Common myeloid progenitor, CD34-positive (primary cell): ENCODE measurements at regions of chr16 and their contacts with region 1.

Region 1: DNA sequence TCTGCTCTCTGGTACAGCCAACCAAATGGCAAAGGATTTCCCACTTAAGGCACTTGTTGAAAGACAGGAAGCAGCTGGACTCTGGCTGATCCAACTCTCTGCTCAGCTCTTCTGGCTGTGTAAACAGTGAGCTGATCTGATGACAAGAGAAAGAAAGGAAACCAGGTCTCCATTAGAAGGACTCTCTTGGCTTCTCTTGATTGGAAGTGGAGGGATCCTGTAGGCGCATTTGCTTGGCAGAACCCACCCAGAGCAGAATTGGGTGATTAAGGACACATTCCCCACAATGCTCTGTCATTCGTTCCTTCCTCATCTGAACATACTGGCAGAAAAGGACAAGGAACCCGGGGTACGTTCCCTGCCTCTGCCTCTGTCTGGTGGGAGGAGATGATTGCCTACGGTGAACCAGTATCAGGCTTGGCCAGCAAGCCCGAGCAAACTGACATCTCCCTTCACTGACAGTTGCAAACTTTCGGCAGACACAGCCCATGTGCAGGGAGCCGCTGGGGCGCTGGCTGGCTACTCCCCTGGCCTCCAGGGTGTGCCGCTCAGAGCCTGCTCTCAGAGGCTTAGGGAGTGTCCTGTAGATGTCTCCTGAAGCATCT is 29.1 kb downstream of the LDHD start:
- DNase-seq: peak in 2 of 3 donors; percentile 79 to 87
- H3K4me3 ChIP-seq: peak overlapping the region in 4 of 7 experiments; percentile 17 to 58 (median 34)
- H3K27ac ChIP-seq: peak overlapping the region; percentile 11 to 73
- H3K4me1 ChIP-seq: peaks cover 16 to 91% (median 66%) of the 10 kb centered on the region in 4 experiments
- H3K27me3 ChIP-seq: no peaks in the 10 kb centered on the region

Region 2: GRCh38 chr16:75099756-75100602 is 12.5 kb after region 1 on chr16:
- CTCF ChIA-PET with region 1: interaction called, 88 read pairs
- POLR2A ChIA-PET with region 1: interaction called, 4 read pairs
- DNase-seq: peak in 2 of 3 donors; percentile 60 to 62
- H3K4me3 ChIP-seq: peak overlapping the region in 4 of 7 experiments; percentile 8 to 30 (median 22)
- H3K27ac ChIP-seq: peak overlapping the region in 1 of 2 experiments; percentile 15
- H3K4me1 ChIP-seq: peaks cover 5 to 90% (median 79%) of the 10 kb centered on the region in 4 experiments
- H3K27me3 ChIP-seq: no peaks in the 10 kb centered on the region

Region 3: DNA sequence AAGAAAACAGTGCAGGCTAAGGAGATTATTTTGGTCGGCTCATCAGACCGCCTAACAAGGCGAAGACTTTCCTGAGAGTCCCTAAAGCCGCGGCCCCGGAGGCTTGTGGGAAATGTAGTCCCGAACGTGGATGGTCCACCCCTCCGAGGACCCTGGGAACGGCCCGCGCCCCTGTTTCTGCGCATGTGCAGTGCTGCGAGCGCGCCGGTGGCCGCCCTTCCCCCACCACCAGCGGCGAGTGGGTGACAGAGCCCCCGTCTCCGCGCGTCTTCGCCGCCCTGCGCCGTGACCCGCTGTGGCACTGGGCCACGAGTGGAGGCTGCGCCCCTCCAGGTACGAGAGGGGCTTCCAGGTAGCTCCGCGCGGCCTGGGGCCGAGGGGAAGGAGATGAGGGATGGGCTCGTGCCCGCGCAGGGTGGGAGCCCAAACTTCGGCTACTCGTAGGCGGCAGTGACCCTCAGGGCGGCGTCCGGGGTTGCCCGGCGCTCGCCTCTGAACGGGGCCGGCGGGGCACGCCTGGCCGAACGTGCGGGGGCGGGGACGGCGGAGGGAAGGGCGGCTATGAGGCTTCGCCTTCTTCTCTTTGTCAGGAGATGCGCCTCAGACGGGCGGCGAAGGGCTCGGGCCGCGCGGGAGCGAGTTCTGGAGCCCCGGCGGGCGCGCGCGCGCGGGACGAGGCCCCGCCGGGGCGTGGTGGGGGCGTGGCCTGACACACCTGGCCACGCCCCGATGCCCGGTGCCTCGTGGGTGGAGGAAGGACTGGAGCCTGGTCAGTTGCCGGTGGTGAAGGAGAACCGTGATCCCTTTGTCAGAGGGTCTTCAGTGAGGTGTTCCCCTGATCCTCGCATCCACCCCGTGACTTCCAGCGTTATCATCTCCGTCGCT is 61.1 kb after region 1 on chr16 and contains the start of gene ZFP1:
- CTCF ChIA-PET with region 1: no interaction called
- POLR2A ChIA-PET with region 1: no interaction called
- DNase-seq: peak; percentile 92 to 95 (median 94)
- H3K4me3 ChIP-seq: peak within 1 kb of the TSS; percentile 94 to 97 (median 97)
- H3K27ac ChIP-seq: peak within 1 kb of the TSS in 1 of 2 experiments; percentile 83
- H3K4me1 ChIP-seq: peaks cover 0 to 8% (median 3%) of the 10 kb centered on the region in 4 experiments
- H3K27me3 ChIP-seq: no peaks in the 10 kb centered on the region